MCF 10A (cell line): ENCODE measurements at regions of chr5 and their contacts with region 1.

Region 1: GRCh38 chr5:51829691-51830090 is 446.4 kb downstream of the ISL1 start:
- DNase-seq: peak; percentile 55
- H3K4me3 Mint-ChIP-seq: peak overlapping the region; percentile 46
- H3K27ac Mint-ChIP-seq: peak overlapping the region; percentile 72
- H3K4me1 Mint-ChIP-seq: peaks cover 23% of the 10 kb centered on the region
- H3K27me3 Mint-ChIP-seq: no peaks in the 10 kb centered on the region
- CTCF ChIP-seq: no peak

Region 2: DNA sequence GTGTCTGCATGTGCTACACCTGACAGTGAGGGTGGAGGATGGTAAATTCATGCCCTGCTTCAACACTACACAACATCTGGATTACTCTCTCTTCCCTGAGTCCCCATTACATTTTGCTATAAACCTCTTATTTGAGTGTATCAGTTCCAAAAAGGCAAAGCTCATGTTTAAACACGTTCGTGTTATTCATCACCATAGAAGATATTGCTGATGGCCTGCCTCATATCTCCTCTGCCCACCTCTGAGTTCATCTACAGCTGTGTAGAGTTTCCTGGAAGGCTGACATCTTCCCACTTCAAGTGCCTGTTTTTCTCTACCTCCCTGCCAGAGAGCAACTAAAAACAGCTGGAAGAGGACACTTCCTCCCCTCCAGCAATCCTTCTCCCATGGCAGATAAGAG is 13.3 kb before region 1 on chr5:
- CTCF ChIA-PET with region 1: interaction called, 4 read pairs
- POLR2A ChIA-PET with region 1: interaction called, 10 read pairs
- intact Hi-C with region 1: no loop called
- DNase-seq: no peak
- H3K4me3 Mint-ChIP-seq: no peak overlapping the region
- H3K27ac Mint-ChIP-seq: no peak overlapping the region
- H3K4me1 Mint-ChIP-seq: peaks cover 27% of the 10 kb centered on the region
- H3K27me3 Mint-ChIP-seq: no peaks in the 10 kb centered on the region
- CTCF ChIP-seq: no peak

Region 3: DNA sequence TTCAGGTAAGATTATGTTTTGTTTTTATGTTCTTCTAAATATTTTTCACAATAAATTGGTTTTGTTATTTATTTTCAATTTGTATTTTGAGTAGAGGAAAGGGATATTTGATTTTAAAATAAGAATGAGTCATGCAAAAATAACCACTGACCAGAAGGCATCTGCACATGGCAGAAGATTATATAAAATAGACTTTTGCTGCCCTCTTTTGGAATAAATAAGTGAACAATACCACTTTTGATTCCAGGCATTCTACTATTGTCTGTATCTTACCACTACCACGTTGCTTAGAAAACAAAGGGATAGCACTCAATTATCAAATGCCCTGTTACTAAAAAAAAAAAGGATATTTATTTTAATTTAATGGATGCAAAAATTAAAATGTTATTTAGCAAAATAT is 730.7 kb after region 1 on chr5:
- CTCF ChIA-PET with region 1: no interaction called
- POLR2A ChIA-PET with region 1: no interaction called
- intact Hi-C with region 1: loop called (anchors 5 kb)
- DNase-seq: peak; percentile 12
- H3K4me3 Mint-ChIP-seq: no peak overlapping the region
- H3K27ac Mint-ChIP-seq: no peak overlapping the region
- H3K4me1 Mint-ChIP-seq: no peaks in the 10 kb centered on the region
- H3K27me3 Mint-ChIP-seq: peaks cover 65% of the 10 kb centered on the region
- CTCF ChIP-seq: peak; percentile 28